ENCODE measurements at regions of chr15 and their contacts with region 1.

Region 1: GRCh38 chr15:70974004-70974832 is 81.6 kb downstream of the LRRC49 start:
- DNase-seq: peak in 2 of 14 experiments; percentile 1 to 3
- ATAC-seq: no peak
- H3K4me3 ChIP-seq: no peak overlapping the region
- H3K4me3 Mint-ChIP-seq: no peak overlapping the region
- H3K27ac ChIP-seq: no peak overlapping the region
- H3K27ac Mint-ChIP-seq: no peak overlapping the region
- H3K4me1 ChIP-seq: no peaks in the 10 kb centered on the region
- H3K4me1 Mint-ChIP-seq: no peaks in the 10 kb centered on the region
- H3K27me3 ChIP-seq: no peaks in the 10 kb centered on the region
- H3K27me3 Mint-ChIP-seq: peaks cover 16% of the 10 kb centered on the region
- CTCF ChIP-seq: no peak

Region 2: GRCh38 chr15:71153823-71154524 is 179.8 kb after region 1 on chr15:
- CTCF ChIA-PET with region 1: no interaction called
- POLR2A ChIA-PET with region 1: no interaction called
- intact Hi-C with region 1: no loop called
- DNase-seq: no peak
- ATAC-seq: no peak
- H3K4me3 ChIP-seq: no peak overlapping the region
- H3K4me3 Mint-ChIP-seq: no peak overlapping the region
- H3K27ac ChIP-seq: no peak overlapping the region
- H3K27ac Mint-ChIP-seq: no peak overlapping the region
- H3K4me1 ChIP-seq: no peaks in the 10 kb centered on the region
- H3K4me1 Mint-ChIP-seq: no peaks in the 10 kb centered on the region
- H3K27me3 ChIP-seq: peaks cover 0 to 2% of the 10 kb centered on the region in 2 experiments
- H3K27me3 Mint-ChIP-seq: peaks cover 11% of the 10 kb centered on the region
- CTCF ChIP-seq: no peak

Region 3: GRCh38 chr15:71448688-71449114 is 474.5 kb after region 1 on chr15:
- CTCF ChIA-PET with region 1: no interaction called
- POLR2A ChIA-PET with region 1: no interaction called
- intact Hi-C with region 1: loop called (anchors 10 kb)
- DNase-seq: peak in 2 of 14 experiments; percentile 3 to 18
- ATAC-seq: no peak
- H3K4me3 ChIP-seq: no peak overlapping the region
- H3K4me3 Mint-ChIP-seq: no peak overlapping the region
- H3K27ac ChIP-seq: no peak overlapping the region
- H3K27ac Mint-ChIP-seq: no peak overlapping the region
- H3K4me1 ChIP-seq: no peaks in the 10 kb centered on the region
- H3K4me1 Mint-ChIP-seq: no peaks in the 10 kb centered on the region
- H3K27me3 ChIP-seq: peaks cover 0 to 6% of the 10 kb centered on the region in 2 experiments
- H3K27me3 Mint-ChIP-seq: peaks cover 14% of the 10 kb centered on the region
- CTCF ChIP-seq: peak; percentile 51

Measured in CD4-positive, alpha-beta T cell (primary cell).